HEK293 (cell line): ENCODE measurements at regions of chr17 and their contacts with region 1.

Region 1: DNA sequence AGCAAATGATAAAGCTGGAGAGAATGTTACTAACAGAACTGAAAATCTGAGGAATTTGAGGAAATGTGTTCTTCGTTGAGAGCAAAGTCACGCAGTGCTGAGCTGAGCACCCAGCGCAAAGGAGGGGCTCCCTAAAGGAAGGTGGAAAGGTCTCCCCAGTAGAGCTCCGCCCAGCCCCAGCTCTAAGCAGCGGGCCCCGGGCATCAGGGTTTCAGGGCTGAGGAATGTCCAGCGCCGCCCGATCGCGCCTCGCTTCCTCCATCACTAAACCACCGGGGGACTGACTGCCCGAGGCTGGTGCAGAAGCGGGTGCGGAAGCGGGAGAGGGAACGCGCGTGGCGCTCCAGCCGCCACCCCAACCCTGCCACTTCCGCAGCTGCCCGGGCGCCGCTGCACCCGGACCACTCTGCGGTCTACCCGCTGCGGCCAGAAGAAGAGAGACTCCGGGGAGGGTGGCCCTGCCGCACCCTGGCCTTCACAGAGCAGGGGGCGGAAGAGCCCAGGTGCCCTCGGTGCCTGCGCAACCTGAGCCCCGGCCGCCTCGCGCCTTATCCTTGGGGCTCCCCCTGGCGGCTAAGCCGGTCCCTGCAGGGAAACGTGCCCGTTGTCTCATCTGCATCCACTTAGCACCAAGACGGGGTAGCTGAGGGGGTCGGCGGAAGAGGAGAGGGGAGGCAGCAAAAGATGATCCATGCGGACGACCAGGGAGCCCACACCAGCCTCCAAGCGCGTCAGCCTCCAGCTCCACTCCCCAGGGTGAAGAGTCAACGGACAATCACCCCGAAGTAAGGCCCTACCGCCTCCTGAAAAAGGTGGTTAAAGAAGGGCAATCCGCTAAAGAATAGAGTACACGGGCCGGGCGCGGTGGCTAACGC is 12.4 kb upstream of the GUCY2D start:
- H3K4me3 ChIP-seq: peak overlapping the region; percentile 59
- H3K27ac ChIP-seq: peak overlapping the region; percentile 29; the same call in 1 of the 2 replicates
- H3K4me1 ChIP-seq: no peaks in the 10 kb centered on the region
- CTCF ChIP-seq: peak; percentile 98

Region 2: GRCh38 chr17:7794075-7794663 is 195.8 kb before region 1 on chr17:
- CTCF ChIA-PET with region 1: no interaction called
- POLR2A ChIA-PET with region 1: no interaction called
- H3K4me3 ChIP-seq: no peak overlapping the region
- H3K27ac ChIP-seq: no peak overlapping the region
- H3K4me1 ChIP-seq: no peaks in the 10 kb centered on the region
- CTCF ChIP-seq: no peak

Region 3: GRCh38 chr17:7818746-7819645 is 171.0 kb before region 1 on chr17:
- CTCF ChIA-PET with region 1: interaction called, 20 read pairs
- POLR2A ChIA-PET with region 1: no interaction called
- H3K4me3 ChIP-seq: no peak overlapping the region
- H3K27ac ChIP-seq: no peak overlapping the region
- H3K4me1 ChIP-seq: no peaks in the 10 kb centered on the region
- CTCF ChIP-seq: no peak

Region 4: DNA sequence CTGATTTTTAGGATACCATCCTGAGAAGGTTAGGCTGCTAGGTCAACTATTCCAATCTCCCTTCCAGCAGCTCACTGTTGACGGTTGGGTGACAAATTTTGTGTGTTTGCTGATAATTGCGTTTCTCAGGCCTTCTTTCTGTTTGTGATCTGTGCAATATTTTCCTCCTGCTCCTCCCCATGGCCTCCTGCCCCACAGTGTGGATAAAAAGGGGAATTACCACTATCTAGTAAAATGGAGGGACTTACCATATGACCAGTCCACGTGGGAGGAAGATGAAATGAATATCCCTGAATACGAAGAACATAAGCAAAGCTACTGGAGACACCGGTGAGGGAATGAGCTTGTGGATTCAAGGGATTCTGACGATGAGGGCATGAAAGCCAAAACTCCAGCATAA is 92.2 kb before region 1 on chr17:
- CTCF ChIA-PET with region 1: interaction called, 24 read pairs
- POLR2A ChIA-PET with region 1: no interaction called
- H3K4me3 ChIP-seq: no peak overlapping the region
- H3K27ac ChIP-seq: no peak overlapping the region
- H3K4me1 ChIP-seq: peaks cover under 1% of the 10 kb centered on the region; the same call in 1 of the 2 replicates
- CTCF ChIP-seq: peak; percentile 81

Region 5: GRCh38 chr17:7931709-7932482 is 58.1 kb before region 1 on chr17 and contains the starts of genes CNTROB and TRAPPC1:
- CTCF ChIA-PET with region 1: interaction called, 36 read pairs
- POLR2A ChIA-PET with region 1: interaction called, 22 read pairs
- H3K4me3 ChIP-seq: peak within 1 kb of the TSS; percentile 93
- H3K27ac ChIP-seq: peak within 1 kb of the TSS; percentile 57; the same call in 1 of the 2 replicates
- H3K4me1 ChIP-seq: peaks cover 5% of the 10 kb centered on the region; the same call in 1 of the 2 replicates
- CTCF ChIP-seq: no peak

Region 6: GRCh38 chr17:8016632-8017478 is 26.8 kb after region 1 on chr17:
- CTCF ChIA-PET with region 1: interaction called, 32 read pairs
- POLR2A ChIA-PET with region 1: no interaction called
- H3K4me3 ChIP-seq: peak overlapping the region; percentile 40
- H3K27ac ChIP-seq: peak overlapping the region; percentile 49; the same call in 1 of the 2 replicates
- H3K4me1 ChIP-seq: no peaks in the 10 kb centered on the region
- CTCF ChIP-seq: peak; percentile 88

Region 7: DNA sequence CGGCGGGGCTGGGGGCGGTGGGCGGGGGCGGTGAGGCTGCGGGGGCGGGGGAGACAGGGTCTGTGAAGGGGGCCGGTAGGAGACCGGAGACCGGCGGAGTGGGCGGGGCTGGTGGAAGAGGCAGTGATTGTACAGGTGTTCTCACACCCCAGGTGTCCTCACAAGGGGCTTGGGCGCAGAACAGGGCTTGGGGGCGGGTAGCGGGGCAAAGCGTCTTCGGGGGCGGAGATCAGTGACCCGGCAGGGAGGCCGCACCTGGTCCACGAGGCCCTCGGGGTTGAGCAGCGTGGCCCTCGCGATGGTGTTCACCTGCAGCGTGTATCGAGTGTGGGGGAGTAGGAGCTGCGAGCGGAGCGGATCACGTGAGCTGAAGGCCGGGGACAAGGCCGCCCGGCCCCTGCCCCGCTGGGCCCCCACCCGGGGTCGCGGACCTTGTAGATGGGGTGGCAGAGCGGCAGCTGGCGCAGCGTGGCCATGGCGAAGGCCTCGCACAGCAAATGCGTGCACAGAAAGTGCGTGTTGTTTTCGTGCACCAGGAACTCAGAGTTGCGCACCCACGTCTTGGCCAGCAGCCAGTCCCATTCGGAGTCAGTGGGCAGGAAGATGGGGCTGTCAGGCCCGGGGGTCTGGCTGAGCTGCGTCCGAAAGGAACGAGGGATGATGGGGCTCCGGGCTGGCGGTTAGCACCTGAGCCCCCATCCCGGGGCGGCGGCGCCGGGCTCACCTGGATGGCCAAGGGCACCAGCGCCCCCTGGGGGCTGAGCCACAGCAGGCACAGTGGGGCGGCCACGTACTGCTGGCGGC is 119.8 kb after region 1 on chr17:
- CTCF ChIA-PET with region 1: interaction called, 11 read pairs
- POLR2A ChIA-PET with region 1: no interaction called
- H3K4me3 ChIP-seq: peak overlapping the region; percentile 18
- H3K27ac ChIP-seq: no peak overlapping the region
- H3K4me1 ChIP-seq: no peaks in the 10 kb centered on the region
- CTCF ChIP-seq: peak; percentile 55

Region 8: GRCh38 chr17:8140060-8141029 is 150.3 kb after region 1 on chr17:
- CTCF ChIA-PET with region 1: no interaction called
- POLR2A ChIA-PET with region 1: no interaction called
- H3K4me3 ChIP-seq: no peak overlapping the region
- H3K27ac ChIP-seq: no peak overlapping the region
- H3K4me1 ChIP-seq: 0 out of 2 replicates have a peak, but pooled peaks cover 4% of the 10 kb centered on the region
- CTCF ChIP-seq: no peak